Activated T-helper 1 cell treated with anti-CD3 and anti-CD28 coated beads, Interleukin-12 subunit alpha, Interleukin-12 subunit beta, Interleukin-2, Interleukin-4 antibody, amounts not matched to agents 30 ng/mL and 10 ng/mL and 1 ng/mL, durations not matched to agents 14 hours and 24 hours and 36 hours (primary cell): ENCODE measurements at regions of chr1 and their contacts with region 1.

Region 1: GRCh38 chr1:100343897-100344296 is 8.4 kb upstream of the CDC14A start:
- DNase-seq: no peak
- H3K4me3 Mint-ChIP-seq: no peak overlapping the region
- H3K27ac Mint-ChIP-seq: no peak overlapping the region
- H3K4me1 Mint-ChIP-seq: no peaks in the 10 kb centered on the region
- H3K27me3 Mint-ChIP-seq: peaks cover 8% of the 10 kb centered on the region

Region 2: DNA sequence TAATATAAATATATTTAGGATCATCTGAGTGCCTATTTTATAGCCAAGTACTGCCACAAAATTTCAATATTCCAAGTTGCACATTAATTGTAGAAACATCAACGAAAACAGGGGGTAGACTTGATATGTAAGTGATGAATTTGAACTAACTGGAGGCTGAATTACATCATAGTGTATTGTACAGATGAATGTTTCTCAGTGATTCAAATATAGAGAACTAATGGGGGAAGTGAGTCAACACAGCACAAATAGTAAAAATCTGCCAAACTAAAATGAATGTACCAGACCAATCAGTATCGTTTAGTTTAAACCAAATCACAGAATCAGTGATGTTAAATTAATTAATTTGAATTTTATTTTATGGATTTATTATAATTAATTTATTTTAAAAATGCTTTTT is 35.1 kb before region 1 on chr1:
- intact Hi-C with region 1: loop called (anchors 5 kb)
- DNase-seq: no peak
- H3K4me3 Mint-ChIP-seq: no peak overlapping the region
- H3K27ac Mint-ChIP-seq: no peak overlapping the region
- H3K4me1 Mint-ChIP-seq: peaks cover 16% of the 10 kb centered on the region
- H3K27me3 Mint-ChIP-seq: no peaks in the 10 kb centered on the region